ENCODE measurements at regions of chr18 and their contacts with region 1.

Region 1: GRCh38 chr18:54023471-54023870 is 201.0 kb downstream of the MBD2 start:
- DNase-seq: no peak
- ATAC-seq: no peak
- H3K4me3 ChIP-seq: no peak overlapping the region
- H3K4me3 Mint-ChIP-seq: no peak overlapping the region
- H3K27ac ChIP-seq: no peak overlapping the region
- H3K27ac Mint-ChIP-seq: no peak overlapping the region
- H3K4me1 ChIP-seq: no peaks in the 10 kb centered on the region
- H3K4me1 Mint-ChIP-seq: no peaks in the 10 kb centered on the region
- H3K27me3 ChIP-seq: no peaks in the 10 kb centered on the region
- H3K27me3 Mint-ChIP-seq: peaks cover 2% of the 10 kb centered on the region
- CTCF ChIP-seq: no peak

Region 2: DNA sequence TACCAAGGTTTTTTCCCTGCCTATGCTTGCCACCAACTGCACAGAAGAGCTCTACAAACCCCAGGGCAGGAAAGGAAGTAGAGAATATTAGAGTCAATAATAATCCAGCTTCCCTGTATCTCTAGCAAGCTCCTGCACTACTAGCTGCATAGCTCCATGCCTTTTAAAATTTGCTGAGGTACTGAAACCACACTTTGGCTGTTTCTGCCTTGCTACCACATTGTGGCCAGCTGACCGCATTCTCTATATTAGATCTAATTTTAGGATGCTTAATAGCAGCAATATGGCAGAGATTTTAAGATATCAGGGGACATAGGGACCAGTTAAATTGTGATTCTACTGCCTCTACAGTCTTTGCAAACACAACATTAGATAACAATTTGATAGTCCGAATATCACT is 333.6 kb before region 1 on chr18:
- CTCF ChIA-PET with region 1: no interaction called
- POLR2A ChIA-PET with region 1: no interaction called
- intact Hi-C with region 1: no loop called
- DNase-seq: no peak
- ATAC-seq: no peak
- H3K4me3 ChIP-seq: no peak overlapping the region
- H3K4me3 Mint-ChIP-seq: no peak overlapping the region
- H3K27ac ChIP-seq: no peak overlapping the region
- H3K27ac Mint-ChIP-seq: no peak overlapping the region
- H3K4me1 ChIP-seq: no peaks in the 10 kb centered on the region
- H3K4me1 Mint-ChIP-seq: no peaks in the 10 kb centered on the region
- H3K27me3 ChIP-seq: no peaks in the 10 kb centered on the region
- H3K27me3 Mint-ChIP-seq: no peaks in the 10 kb centered on the region
- CTCF ChIP-seq: no peak

Region 3: DNA sequence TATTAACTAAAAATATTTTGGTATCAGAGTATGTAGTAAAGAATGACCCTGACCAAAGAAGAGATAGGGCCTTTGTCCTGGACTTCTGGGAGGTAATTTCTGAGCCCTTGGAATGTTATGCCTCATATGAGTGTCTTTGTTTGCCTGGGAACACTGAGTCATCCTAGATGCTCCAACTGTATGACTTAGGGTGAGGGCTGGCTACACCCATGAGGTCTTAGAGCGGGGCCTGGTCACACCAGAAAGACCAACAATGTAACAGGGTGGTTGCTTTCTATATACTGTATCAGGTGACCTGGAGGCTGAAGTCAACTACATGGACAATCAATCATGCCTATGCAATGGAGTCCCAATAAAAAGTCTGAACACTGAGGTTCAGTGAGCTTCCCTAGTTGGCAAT is 52.1 kb before region 1 on chr18:
- CTCF ChIA-PET with region 1: no interaction called
- POLR2A ChIA-PET with region 1: no interaction called
- intact Hi-C with region 1: loop called in 1 of 2 experiments (anchors 10 kb)
- DNase-seq: no peak
- ATAC-seq: no peak
- H3K4me3 ChIP-seq: no peak overlapping the region
- H3K4me3 Mint-ChIP-seq: no peak overlapping the region
- H3K27ac ChIP-seq: no peak overlapping the region
- H3K27ac Mint-ChIP-seq: no peak overlapping the region
- H3K4me1 ChIP-seq: no peaks in the 10 kb centered on the region
- H3K4me1 Mint-ChIP-seq: no peaks in the 10 kb centered on the region
- H3K27me3 ChIP-seq: no peaks in the 10 kb centered on the region
- H3K27me3 Mint-ChIP-seq: no peaks in the 10 kb centered on the region
- CTCF ChIP-seq: no peak

Region 4: DNA sequence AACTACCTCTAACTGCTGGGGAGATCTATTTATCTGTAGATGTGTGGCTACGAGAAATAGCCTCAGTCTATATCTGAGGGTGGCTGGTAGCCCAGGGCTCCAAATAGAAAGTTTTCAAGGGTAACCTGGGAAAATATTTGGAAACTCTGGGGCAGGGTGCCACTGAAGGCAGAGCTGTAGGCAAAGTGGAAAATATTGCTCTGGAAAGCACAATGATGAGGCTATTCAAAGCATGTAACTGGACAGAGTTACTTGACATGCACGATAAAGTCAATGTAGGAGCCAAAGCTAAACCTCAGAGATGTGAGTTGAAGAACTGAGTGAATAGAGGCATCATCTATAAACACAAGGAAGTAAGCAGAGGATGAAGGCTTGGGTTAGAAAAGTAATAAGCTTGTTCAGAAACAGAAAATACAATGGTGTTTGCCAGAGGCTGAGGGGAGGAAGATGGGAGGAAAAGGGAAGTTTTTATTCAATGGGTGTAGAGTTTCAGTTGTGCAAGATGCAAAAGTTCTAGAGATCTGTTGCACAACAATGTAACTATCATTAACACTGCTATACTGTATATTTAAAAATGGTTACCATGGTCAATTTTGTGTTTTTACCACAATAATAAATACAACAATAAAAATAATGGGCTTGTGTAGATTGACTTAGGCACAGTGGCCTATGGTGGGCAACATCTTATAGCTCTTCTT is 29.4 kb after region 1 on chr18:
- CTCF ChIA-PET with region 1: no interaction called
- POLR2A ChIA-PET with region 1: no interaction called
- intact Hi-C with region 1: loop called in 1 of 2 experiments (anchors 1 kb)
- DNase-seq: no peak
- ATAC-seq: no peak
- H3K4me3 ChIP-seq: no peak overlapping the region
- H3K4me3 Mint-ChIP-seq: no peak overlapping the region
- H3K27ac ChIP-seq: no peak overlapping the region
- H3K27ac Mint-ChIP-seq: no peak overlapping the region
- H3K4me1 ChIP-seq: no peaks in the 10 kb centered on the region
- H3K4me1 Mint-ChIP-seq: no peaks in the 10 kb centered on the region
- H3K27me3 ChIP-seq: no peaks in the 10 kb centered on the region
- H3K27me3 Mint-ChIP-seq: peaks cover 3% of the 10 kb centered on the region
- CTCF ChIP-seq: no peak

Region 5: GRCh38 chr18:54173980-54174630 is 150.6 kb after region 1 on chr18:
- CTCF ChIA-PET with region 1: no interaction called
- POLR2A ChIA-PET with region 1: no interaction called
- intact Hi-C with region 1: no loop called
- DNase-seq: peak in 1 of 9 experiments; percentile 16
- ATAC-seq: no peak
- H3K4me3 ChIP-seq: no peak overlapping the region
- H3K4me3 Mint-ChIP-seq: no peak overlapping the region
- H3K27ac ChIP-seq: no peak overlapping the region
- H3K27ac Mint-ChIP-seq: peak overlapping the region; percentile 6
- H3K4me1 ChIP-seq: no peaks in the 10 kb centered on the region
- H3K4me1 Mint-ChIP-seq: peaks cover 18% of the 10 kb centered on the region
- H3K27me3 ChIP-seq: no peaks in the 10 kb centered on the region
- H3K27me3 Mint-ChIP-seq: no peaks in the 10 kb centered on the region
- CTCF ChIP-seq: no peak

Measured in CD8-positive, alpha-beta T cell (primary cell).